Activated CD8-positive, alpha-beta T cell treated with anti-CD3 and anti-CD28 coated beads, Interleukin-2, amount 10 ng/mL, durations not matched to agents 7 days and 5 days (primary cell): ENCODE measurements at regions of chr1 and their contacts with region 1.

Region 1: DNA sequence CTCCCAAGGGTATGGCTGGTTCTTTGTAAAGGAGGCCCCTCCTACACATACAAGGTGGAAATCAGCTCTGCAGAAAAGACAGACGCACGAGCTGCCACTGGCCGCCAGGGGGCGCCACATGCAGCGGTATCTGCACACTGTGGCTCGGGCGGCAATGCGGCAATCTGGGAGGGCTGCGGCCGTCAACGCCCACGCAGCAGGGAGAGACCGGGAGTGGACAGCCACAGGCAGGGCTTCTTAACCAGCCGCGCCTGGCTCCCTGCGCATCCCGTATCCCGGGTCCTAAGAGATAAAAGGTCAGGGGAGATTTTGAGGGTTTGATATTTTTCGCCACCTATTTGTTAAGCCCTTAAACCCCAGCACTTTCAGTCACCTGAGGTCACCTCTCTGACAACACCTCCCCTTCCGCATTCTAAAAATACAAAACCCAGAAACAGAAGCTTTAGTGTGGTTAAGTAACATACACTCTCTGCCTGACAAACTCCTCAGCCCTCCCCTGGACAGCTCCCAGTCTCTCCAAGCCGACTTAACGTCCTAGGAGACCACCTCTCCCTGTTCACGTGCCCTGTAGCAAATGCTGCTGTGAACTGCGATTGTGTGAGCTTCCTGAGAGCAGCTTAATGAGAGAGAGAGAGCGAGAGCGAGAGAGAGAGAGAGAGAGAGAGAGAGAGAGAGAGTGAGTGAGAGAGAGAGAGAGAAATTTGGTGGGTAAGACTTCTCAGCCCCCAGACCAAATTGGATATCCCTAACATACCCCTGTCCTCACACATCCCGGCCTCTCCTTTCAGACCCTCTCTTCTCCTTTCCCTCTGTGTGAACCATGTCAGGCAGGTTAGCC is 13.5 kb upstream of the KCNA2 start:
- DNase-seq: peak; percentile 93
- ATAC-seq: peak; percentile 90
- H3K4me3 Mint-ChIP-seq: peak overlapping the region; percentile 82
- H3K27ac Mint-ChIP-seq: peak overlapping the region; percentile 93
- H3K4me1 Mint-ChIP-seq: peaks cover 50% of the 10 kb centered on the region
- H3K27me3 Mint-ChIP-seq: peaks cover under 1% of the 10 kb centered on the region

Region 2: GRCh38 chr1:110460253-110461220 is 159.1 kb before region 1 on chr1:
- CTCF ChIA-PET with region 1: no interaction called
- POLR2A ChIA-PET with region 1: no interaction called
- DNase-seq: peak; percentile 88
- ATAC-seq: peak; percentile 88
- H3K4me3 Mint-ChIP-seq: no peak overlapping the region
- H3K27ac Mint-ChIP-seq: no peak overlapping the region
- H3K4me1 Mint-ChIP-seq: no peaks in the 10 kb centered on the region
- H3K27me3 Mint-ChIP-seq: no peaks in the 10 kb centered on the region

Region 3: GRCh38 chr1:110524311-110525251 is 95.0 kb before region 1 on chr1:
- CTCF ChIA-PET with region 1: interaction called, 12 read pairs
- POLR2A ChIA-PET with region 1: no interaction called
- DNase-seq: peak; percentile 73
- ATAC-seq: peak; percentile 77
- H3K4me3 Mint-ChIP-seq: no peak overlapping the region
- H3K27ac Mint-ChIP-seq: no peak overlapping the region
- H3K4me1 Mint-ChIP-seq: peaks cover 1% of the 10 kb centered on the region
- H3K27me3 Mint-ChIP-seq: peaks cover 38% of the 10 kb centered on the region

Region 4: DNA sequence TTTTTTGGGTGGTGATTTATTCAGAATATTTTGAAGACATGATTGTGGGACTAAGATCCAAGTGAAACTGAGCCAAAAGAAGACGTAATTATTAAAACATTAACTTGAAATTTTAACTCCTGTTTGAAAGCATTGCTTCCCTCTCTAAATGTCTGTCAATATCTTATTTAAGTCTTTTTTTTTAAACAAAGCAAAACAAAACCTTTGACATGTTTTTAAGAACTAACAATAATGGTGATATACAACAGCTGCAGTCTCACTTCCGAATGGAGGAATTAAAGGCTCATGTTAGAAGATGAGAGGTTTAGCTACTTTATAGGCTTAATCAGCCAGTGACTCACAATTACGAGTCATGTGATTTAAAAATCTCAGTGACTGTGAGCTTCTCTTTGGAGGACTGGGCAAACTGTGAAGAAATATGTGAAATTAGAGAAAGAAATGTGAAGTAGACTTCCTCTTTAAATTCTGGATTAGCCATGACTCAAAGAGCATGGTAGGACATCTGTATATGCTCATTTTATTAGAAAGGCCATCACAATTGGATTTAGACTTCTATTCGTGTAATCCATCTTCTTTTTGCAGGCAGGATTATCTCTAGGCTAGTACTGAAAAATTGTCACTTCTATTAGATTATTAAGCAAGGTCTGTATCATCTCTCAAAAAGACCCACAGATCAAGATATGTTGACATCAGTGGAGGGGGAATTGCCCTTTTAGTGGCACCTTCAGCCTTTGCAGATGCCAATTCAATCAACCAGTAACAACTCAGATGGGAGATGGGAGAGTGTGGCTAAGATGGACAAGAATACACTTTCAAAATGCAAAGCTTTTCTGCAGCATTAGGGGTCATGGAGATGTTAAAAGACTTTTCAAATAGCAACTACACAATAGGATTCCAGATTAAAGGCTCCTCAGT is 26.4 kb after region 1 on chr1:
- CTCF ChIA-PET with region 1: interaction called, 53 read pairs
- POLR2A ChIA-PET with region 1: interaction called, 16 read pairs
- DNase-seq: no peak
- ATAC-seq: no peak
- H3K4me3 Mint-ChIP-seq: no peak overlapping the region
- H3K27ac Mint-ChIP-seq: peak overlapping the region; percentile 53
- H3K4me1 Mint-ChIP-seq: peaks cover 41% of the 10 kb centered on the region
- H3K27me3 Mint-ChIP-seq: no peaks in the 10 kb centered on the region

Region 5: GRCh38 chr1:110668549-110668948 is 48.9 kb after region 1 on chr1:
- CTCF ChIA-PET with region 1: interaction called, 60 read pairs
- POLR2A ChIA-PET with region 1: interaction called, 51 read pairs
- DNase-seq: no peak
- ATAC-seq: peak; percentile 21
- H3K4me3 Mint-ChIP-seq: peak overlapping the region; percentile 66
- H3K27ac Mint-ChIP-seq: peak overlapping the region; percentile 78
- H3K4me1 Mint-ChIP-seq: peaks cover 35% of the 10 kb centered on the region
- H3K27me3 Mint-ChIP-seq: no peaks in the 10 kb centered on the region

Region 6: GRCh38 chr1:110713221-110713620 is 93.6 kb after region 1 on chr1:
- CTCF ChIA-PET with region 1: interaction called, 13 read pairs
- POLR2A ChIA-PET with region 1: no interaction called
- DNase-seq: no peak
- ATAC-seq: no peak
- H3K4me3 Mint-ChIP-seq: no peak overlapping the region
- H3K27ac Mint-ChIP-seq: no peak overlapping the region
- H3K4me1 Mint-ChIP-seq: peaks cover 23% of the 10 kb centered on the region
- H3K27me3 Mint-ChIP-seq: peaks cover 3% of the 10 kb centered on the region

Region 7: GRCh38 chr1:110787328-110788071 is 167.9 kb after region 1 on chr1:
- CTCF ChIA-PET with region 1: interaction called, 146 read pairs
- POLR2A ChIA-PET with region 1: interaction called, 6 read pairs
- DNase-seq: peak; percentile 87
- ATAC-seq: peak; percentile 81
- H3K4me3 Mint-ChIP-seq: peak overlapping the region; percentile 66
- H3K27ac Mint-ChIP-seq: peak overlapping the region; percentile 95
- H3K4me1 Mint-ChIP-seq: peaks cover 73% of the 10 kb centered on the region
- H3K27me3 Mint-ChIP-seq: no peaks in the 10 kb centered on the region